ENCODE measurements at regions of chr6 and their contacts with region 1.

Region 1: DNA sequence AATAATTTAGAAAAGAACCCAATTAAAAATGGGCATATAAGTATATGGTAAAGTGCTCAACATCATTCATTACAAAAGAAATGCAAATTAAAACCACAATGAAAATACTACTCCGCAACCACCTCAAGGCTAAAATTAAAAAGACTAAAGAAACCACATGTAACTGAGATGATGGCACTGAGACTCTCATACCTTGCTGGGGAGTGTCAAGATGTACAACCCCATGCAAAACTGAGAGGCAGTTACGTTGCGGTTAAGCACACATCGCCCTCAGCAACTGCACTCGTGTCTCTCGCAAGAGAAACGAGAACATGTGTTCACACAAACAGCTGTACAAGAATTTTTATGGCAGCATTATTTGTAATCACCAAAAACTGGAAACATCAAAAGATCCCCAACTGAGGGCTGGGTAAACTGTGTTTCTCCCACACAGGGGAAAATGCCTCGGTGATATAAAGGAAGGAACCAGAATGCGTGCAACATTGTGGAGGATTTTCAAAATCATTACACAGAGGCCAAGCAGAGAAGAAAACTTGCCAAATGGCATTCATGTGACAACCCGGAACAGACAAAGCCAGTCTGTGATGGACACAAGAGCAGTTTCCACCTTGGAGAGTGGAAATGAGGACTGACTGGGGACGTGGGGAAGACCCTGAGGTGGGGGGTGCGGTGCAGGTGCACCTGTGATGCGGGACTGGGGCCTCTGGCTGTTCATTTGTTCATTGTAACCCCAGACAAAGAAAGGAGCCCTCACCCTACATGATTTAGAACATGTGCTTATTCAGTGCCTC is 144.9 kb downstream of the WDR27 start:
- DNase-seq: peak; percentile 70
- H3K4me3 Mint-ChIP-seq: no peak overlapping the region
- H3K27ac Mint-ChIP-seq: no peak overlapping the region
- H3K4me1 Mint-ChIP-seq: peaks cover 12% of the 10 kb centered on the region
- H3K27me3 Mint-ChIP-seq: peaks cover 8% of the 10 kb centered on the region

Region 2: GRCh38 chr6:168239044-168239773 is 1317.7 kb before region 1 on chr6:
- CTCF ChIA-PET with region 1: no interaction called
- intact Hi-C with region 1: no loop called
- DNase-seq: no peak
- H3K4me3 Mint-ChIP-seq: no peak overlapping the region
- H3K27ac Mint-ChIP-seq: no peak overlapping the region
- H3K4me1 Mint-ChIP-seq: no peaks in the 10 kb centered on the region
- H3K27me3 Mint-ChIP-seq: no peaks in the 10 kb centered on the region

Region 3: DNA sequence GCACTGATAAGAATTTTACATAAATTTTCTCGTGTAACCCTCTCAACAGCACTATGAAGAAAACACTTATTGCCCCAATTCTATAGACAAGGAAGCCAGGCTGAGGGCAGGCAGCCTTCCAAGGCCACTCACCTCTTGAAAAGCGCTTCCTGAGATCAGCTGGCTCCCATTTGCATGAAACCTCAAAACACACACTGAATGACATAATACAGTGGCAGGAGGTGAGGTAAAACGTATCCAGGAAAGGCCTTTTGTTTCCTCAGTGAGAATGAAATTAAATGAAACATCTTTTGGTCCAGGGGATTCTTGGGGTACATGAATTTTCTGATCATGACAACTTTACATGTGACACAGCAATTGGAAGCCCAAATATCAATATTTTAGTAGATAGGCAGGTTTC is 32.3 kb after region 1 on chr6:
- CTCF ChIA-PET with region 1: no interaction called
- intact Hi-C with region 1: loop called (anchors 1 kb)
- DNase-seq: peak; percentile 58
- H3K4me3 Mint-ChIP-seq: no peak overlapping the region
- H3K27ac Mint-ChIP-seq: no peak overlapping the region
- H3K4me1 Mint-ChIP-seq: peaks cover 16% of the 10 kb centered on the region
- H3K27me3 Mint-ChIP-seq: no peaks in the 10 kb centered on the region